ENCODE measurements at regions of chr1 and their contacts with region 1.

Region 1: DNA sequence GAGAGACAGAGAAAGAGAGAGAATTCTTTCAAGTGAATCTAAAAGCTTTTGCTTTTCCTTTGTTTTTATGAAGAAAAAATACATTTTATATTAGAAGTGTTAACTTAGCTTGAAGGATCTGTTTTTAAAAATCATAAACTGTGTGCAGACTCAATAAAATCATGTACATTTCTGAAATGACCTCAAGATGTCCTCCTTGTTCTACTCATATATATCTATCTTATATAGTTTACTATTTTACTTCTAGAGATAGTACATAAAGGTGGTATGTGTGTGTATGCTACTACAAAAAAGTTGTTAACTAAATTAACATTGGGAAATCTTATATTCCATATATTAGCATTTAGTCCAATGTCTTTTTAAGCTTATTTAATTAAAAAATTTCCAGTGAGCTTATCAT is 117.6 kb downstream of the PTPRC start:
- DNase-seq: no peak
- ATAC-seq: no peak
- H3K4me3 ChIP-seq: no peak overlapping the region
- H3K27ac ChIP-seq: no peak overlapping the region
- H3K4me1 ChIP-seq: no peaks in the 10 kb centered on the region
- H3K27me3 ChIP-seq: no peaks in the 10 kb centered on the region
- CTCF ChIP-seq: no peak
- EP300 ChIP-seq: no peak
- POLR2A ChIP-seq: no peak
- RAD21 ChIP-seq: no peak

Region 2: GRCh38 chr1:198776602-198777029 is 20.1 kb after region 1 on chr1:
- CTCF ChIA-PET with region 1: no interaction called
- POLR2A ChIA-PET with region 1: no interaction called
- in situ Hi-C with region 1: no loop called
- intact Hi-C with region 1: no loop called
- DNase-seq: no peak
- ATAC-seq: no peak
- H3K4me3 ChIP-seq: no peak overlapping the region
- H3K27ac ChIP-seq: no peak overlapping the region
- H3K4me1 ChIP-seq: no peaks in the 10 kb centered on the region
- H3K27me3 ChIP-seq: no peaks in the 10 kb centered on the region; a peak in 1 of 5 replicates
- CTCF ChIP-seq: no peak
- EP300 ChIP-seq: no peak
- POLR2A ChIP-seq: no peak
- RAD21 ChIP-seq: no peak

Region 3: DNA sequence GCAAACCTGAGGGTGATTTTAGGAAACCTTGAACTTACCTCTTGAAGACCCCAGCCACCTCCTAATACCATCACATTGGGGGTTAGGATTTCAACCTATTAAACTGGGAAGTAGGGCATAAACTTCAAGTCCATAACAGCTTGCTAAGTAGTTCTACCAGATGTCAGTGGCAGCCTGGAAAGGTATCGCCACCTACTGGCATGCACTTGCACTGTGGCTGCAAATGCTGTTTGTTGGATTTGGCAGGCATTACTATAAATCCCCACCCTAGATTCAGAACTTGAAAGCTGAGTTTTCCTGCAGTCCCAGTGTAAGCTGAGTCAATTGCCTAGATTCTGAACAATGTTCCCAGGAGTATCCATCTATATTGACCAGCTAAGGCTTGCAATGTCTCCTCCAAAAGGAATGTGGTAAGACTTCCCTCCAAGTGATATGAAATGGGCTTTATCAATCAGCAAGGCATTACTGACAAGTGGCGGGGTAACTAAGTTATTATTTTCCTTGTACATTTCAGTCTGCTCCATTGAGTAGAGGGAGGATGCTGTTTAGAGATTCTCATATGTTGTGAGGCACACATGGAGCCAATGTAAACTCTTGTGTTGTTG is 356.9 kb after region 1 on chr1:
- CTCF ChIA-PET with region 1: no interaction called
- POLR2A ChIA-PET with region 1: no interaction called
- in situ Hi-C with region 1: loop called (anchors 25 kb)
- intact Hi-C with region 1: loop called (anchors 1 kb)
- DNase-seq: peak; percentile 10
- ATAC-seq: peak; percentile 64
- H3K4me3 ChIP-seq: no peak overlapping the region
- H3K27ac ChIP-seq: no peak overlapping the region
- H3K4me1 ChIP-seq: no peaks in the 10 kb centered on the region
- H3K27me3 ChIP-seq: no peaks in the 10 kb centered on the region
- CTCF ChIP-seq: peak; percentile 56
- EP300 ChIP-seq: no peak
- POLR2A ChIP-seq: no peak
- RAD21 ChIP-seq: no peak

Region 4: DNA sequence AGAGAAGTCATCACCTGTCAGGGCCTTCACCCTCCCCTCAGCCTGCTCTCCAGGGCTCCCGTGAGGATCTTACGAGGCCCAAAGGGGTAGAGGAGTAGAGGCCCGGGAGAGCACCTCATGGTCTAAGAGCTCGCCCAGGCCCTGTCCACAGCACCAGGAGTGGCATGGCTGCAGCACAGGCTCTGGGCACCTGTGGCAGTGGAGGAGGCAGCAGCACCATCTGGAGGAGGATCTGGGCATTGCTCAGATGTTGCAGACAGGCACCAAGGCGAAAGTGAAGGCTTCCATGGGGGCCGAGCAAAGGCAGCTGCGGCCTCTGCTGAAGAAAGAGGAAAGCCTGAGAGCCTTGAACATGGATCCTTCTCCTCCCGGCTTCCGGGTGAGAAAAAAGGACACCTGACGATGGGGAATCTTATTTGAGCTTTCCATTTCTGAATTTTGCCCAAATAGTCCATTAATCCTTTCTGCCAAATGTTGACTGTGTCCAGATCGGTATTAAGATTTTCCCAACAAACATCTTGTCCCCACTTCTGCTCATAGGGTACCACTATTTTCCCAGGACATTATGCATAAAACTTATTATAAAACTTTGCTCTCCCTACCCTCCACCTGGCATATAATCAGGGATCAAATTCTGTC is 487.1 kb after region 1 on chr1:
- CTCF ChIA-PET with region 1: interaction called, 3 read pairs
- POLR2A ChIA-PET with region 1: no interaction called
- in situ Hi-C with region 1: no loop called
- intact Hi-C with region 1: loop called (anchors 5 kb)
- DNase-seq: peak; percentile 1
- ATAC-seq: peak; percentile 88
- H3K4me3 ChIP-seq: no peak overlapping the region
- H3K27ac ChIP-seq: no peak overlapping the region
- H3K4me1 ChIP-seq: peaks cover 11% of the 10 kb centered on the region; the same call in 1 of the 2 replicates
- H3K27me3 ChIP-seq: no peaks in the 10 kb centered on the region
- CTCF ChIP-seq: peak; percentile 63
- EP300 ChIP-seq: no peak
- POLR2A ChIP-seq: no peak
- RAD21 ChIP-seq: no peak

Region 5: DNA sequence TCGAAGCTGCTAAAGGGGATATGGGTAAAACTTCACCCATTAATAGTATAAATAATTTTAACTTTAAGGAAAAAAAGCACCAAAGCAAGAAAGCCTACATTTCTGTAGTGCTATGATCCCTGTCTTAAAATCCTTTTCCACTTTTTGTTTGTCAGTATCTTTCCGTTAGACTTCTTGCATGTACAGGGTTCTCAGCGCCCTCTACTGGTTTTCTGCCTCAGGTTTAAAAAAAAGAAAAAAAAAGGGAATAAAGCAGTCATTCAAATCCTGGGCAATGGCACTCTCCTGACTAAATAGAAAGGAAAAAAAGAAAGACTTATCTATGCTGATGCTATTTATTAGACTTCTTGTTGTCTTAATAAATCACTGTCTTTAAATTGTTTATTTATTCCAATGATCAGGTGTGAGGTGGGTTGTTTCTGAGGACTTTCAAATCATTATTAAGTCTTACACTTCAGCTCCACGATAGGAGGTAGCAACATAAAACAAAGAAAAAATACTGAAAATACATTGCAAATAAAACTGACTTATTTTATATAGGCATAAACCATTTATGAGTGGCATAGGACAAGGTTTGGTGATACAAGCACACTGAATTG is 795.6 kb after region 1 on chr1:
- CTCF ChIA-PET with region 1: no interaction called
- POLR2A ChIA-PET with region 1: no interaction called
- in situ Hi-C with region 1: no loop called
- intact Hi-C with region 1: loop called (anchors 5 kb)
- DNase-seq: peak; percentile 44
- ATAC-seq: no peak; the same call in 2 of the 3 replicates
- H3K4me3 ChIP-seq: no peak overlapping the region
- H3K27ac ChIP-seq: no peak overlapping the region
- H3K4me1 ChIP-seq: no peaks in the 10 kb centered on the region
- H3K27me3 ChIP-seq: no peaks in the 10 kb centered on the region
- CTCF ChIP-seq: peak; percentile 60
- EP300 ChIP-seq: no peak
- POLR2A ChIP-seq: no peak
- RAD21 ChIP-seq: no peak